Naive thymus-derived CD4-positive, alpha-beta T cell (primary cell): ENCODE measurements at regions of chr12 and their contacts with region 1.

Region 1: GRCh38 chr12:124767066-124767821 is 96.4 kb downstream of the SCARB1 start:
- DNase-seq: peak; percentile 66 to 89 (median 82)
- ATAC-seq: peak; percentile 93
- H3K4me3 ChIP-seq: no peak overlapping the region
- H3K4me3 Mint-ChIP-seq: peak overlapping the region in 1 of 10 donors; percentile 20
- H3K27ac ChIP-seq: no peak overlapping the region
- H3K27ac Mint-ChIP-seq: peak overlapping the region in 6 of 9 donors; percentile 9 to 81 (median 30)
- H3K4me1 ChIP-seq: peaks cover 5% of the 10 kb centered on the region in 2 donors
- H3K4me1 Mint-ChIP-seq: peaks cover 10 to 20% (median 13%) of the 10 kb centered on the region in 7 donors
- H3K27me3 ChIP-seq: no peaks in the 10 kb centered on the region
- H3K27me3 Mint-ChIP-seq: peaks cover 4 to 20% (median 6%) of the 10 kb centered on the region in 5 donors

Region 2: GRCh38 chr12:124036674-124037109 is 730.6 kb before region 1 on chr12:
- CTCF ChIA-PET with region 1: interaction called, 25 read pairs
- POLR2A ChIA-PET with region 1: no interaction called
- intact Hi-C with region 1: loop called (anchors 1 kb)
- DNase-seq: peak in 7 of 9 donors; percentile 14 to 57 (median 37)
- ATAC-seq: peak; percentile 72
- H3K4me3 ChIP-seq: no peak overlapping the region
- H3K4me3 Mint-ChIP-seq: no peak overlapping the region
- H3K27ac ChIP-seq: no peak overlapping the region
- H3K27ac Mint-ChIP-seq: no peak overlapping the region
- H3K4me1 ChIP-seq: no peaks in the 10 kb centered on the region
- H3K4me1 Mint-ChIP-seq: no peaks in the 10 kb centered on the region
- H3K27me3 ChIP-seq: no peaks in the 10 kb centered on the region
- H3K27me3 Mint-ChIP-seq: peaks cover 8 to 10% (median 9%) of the 10 kb centered on the region in 5 donors

Region 3: DNA sequence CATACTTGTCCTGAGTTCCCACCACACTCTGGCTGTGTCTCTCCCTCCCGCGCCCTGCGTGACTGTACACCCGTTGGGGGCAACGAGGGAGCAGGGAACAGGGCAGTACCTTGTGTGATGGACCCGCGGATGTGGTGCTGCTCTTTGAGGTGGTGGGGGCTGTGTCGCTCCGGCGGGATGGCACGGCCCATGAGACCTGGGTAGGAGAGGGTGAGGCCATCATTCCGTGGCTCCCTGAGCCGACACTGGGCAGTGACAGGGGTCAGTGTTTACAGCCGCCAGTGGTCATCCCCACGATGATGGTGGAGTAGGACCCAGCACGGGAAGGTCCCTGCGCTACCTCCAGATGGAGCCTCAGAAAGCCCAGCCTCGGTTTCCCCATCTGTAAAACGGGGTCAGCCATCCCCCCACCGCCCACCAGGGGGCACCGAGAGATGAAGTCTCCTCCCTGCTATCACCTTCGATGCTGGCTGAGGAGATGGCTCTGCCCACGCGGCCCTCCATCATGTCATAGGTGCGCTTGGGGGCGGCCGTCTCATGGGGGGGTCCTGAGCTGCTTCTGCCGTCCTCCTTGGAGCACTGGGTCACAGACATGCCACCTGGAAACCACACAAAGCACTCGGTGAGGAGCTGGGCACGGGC is 419.4 kb before region 1 on chr12:
- CTCF ChIA-PET with region 1: interaction called, 23 read pairs
- POLR2A ChIA-PET with region 1: no interaction called
- intact Hi-C with region 1: loop called (anchors 1 kb)
- DNase-seq: peak in 6 of 9 donors; percentile 5 to 43 (median 24)
- ATAC-seq: no peak
- H3K4me3 ChIP-seq: no peak overlapping the region
- H3K4me3 Mint-ChIP-seq: no peak overlapping the region
- H3K27ac ChIP-seq: no peak overlapping the region
- H3K27ac Mint-ChIP-seq: no peak overlapping the region
- H3K4me1 ChIP-seq: no peaks in the 10 kb centered on the region
- H3K4me1 Mint-ChIP-seq: no peaks in the 10 kb centered on the region
- H3K27me3 ChIP-seq: no peaks in the 10 kb centered on the region
- H3K27me3 Mint-ChIP-seq: no peaks in the 10 kb centered on the region

Region 4: DNA sequence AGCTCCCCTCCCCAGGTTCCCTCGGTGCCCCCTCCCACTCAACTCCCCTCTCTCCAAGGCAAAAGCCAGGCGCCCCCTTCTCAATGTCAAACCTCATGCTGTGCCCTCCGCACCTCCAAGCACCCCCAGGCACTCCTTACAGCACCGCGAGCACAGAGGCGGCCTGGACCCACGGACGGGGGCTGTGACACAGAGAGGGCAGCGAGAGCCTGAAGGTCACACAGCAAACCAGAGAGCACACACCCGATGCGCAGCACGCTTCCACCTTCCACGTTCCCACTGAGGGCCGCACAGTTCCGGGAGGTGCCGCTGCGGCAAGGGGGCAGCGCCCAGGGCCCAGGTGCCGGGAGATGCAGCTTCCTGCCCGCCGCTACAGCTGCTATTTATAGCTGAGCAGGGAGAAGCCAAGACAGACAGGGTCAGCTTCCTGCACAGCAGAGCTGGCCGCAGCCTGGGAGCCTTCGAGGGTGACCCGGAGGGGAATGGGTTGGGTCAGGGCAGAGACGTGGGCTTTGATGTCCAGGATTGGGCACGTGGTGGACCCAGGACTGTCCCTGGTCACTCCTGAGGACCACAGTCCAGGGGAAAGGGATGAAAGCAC is 212.7 kb before region 1 on chr12:
- CTCF ChIA-PET with region 1: interaction called, 5 read pairs
- POLR2A ChIA-PET with region 1: no interaction called
- intact Hi-C with region 1: loop called in 1 of 2 experiments (anchors 1 kb)
- DNase-seq: peak in 3 of 9 donors; percentile 24 to 27 (median 26)
- ATAC-seq: peak; percentile 20
- H3K4me3 ChIP-seq: peak overlapping the region; percentile 38
- H3K4me3 Mint-ChIP-seq: peak overlapping the region; percentile 5 to 82 (median 70)
- H3K27ac ChIP-seq: no peak overlapping the region
- H3K27ac Mint-ChIP-seq: peak overlapping the region in 2 of 9 donors; percentile 23 to 70
- H3K4me1 ChIP-seq: peaks cover 0 to 41% of the 10 kb centered on the region in 2 donors
- H3K4me1 Mint-ChIP-seq: peaks cover 30 to 84% (median 70%) of the 10 kb centered on the region in 7 donors
- H3K27me3 ChIP-seq: no peaks in the 10 kb centered on the region
- H3K27me3 Mint-ChIP-seq: no peaks in the 10 kb centered on the region

Region 5: GRCh38 chr12:124863416-124864325 is 96.4 kb after region 1 on chr12 and contains the start of gene SCARB1:
- CTCF ChIA-PET with region 1: no interaction called
- POLR2A ChIA-PET with region 1: no interaction called
- intact Hi-C with region 1: loop called in 1 of 2 experiments (anchors 5 kb)
- DNase-seq: peak; percentile 60 to 84 (median 72)
- ATAC-seq: peak; percentile 95
- H3K4me3 ChIP-seq: peak within 1 kb of the TSS; percentile 74
- H3K4me3 Mint-ChIP-seq: peak within 1 kb of the TSS; percentile 70 to 94 (median 81)
- H3K27ac ChIP-seq: peak within 1 kb of the TSS; percentile 58
- H3K27ac Mint-ChIP-seq: peak within 1 kb of the TSS; percentile 66 to 94 (median 83)
- H3K4me1 ChIP-seq: no peaks in the 10 kb centered on the region
- H3K4me1 Mint-ChIP-seq: peaks cover 9 to 25% (median 14%) of the 10 kb centered on the region in 7 donors
- H3K27me3 ChIP-seq: no peaks in the 10 kb centered on the region
- H3K27me3 Mint-ChIP-seq: peaks cover 0 to 8% (median 3%) of the 10 kb centered on the region in 5 donors
- total RNA-seq, gene SCARB1: 2.5 to 7.1 (median 4.3) TPM